Esophagus muscularis mucosa (tissue), 4 donors: ENCODE measurements at regions of chr18 and their contacts with region 1.

Region 1: DNA sequence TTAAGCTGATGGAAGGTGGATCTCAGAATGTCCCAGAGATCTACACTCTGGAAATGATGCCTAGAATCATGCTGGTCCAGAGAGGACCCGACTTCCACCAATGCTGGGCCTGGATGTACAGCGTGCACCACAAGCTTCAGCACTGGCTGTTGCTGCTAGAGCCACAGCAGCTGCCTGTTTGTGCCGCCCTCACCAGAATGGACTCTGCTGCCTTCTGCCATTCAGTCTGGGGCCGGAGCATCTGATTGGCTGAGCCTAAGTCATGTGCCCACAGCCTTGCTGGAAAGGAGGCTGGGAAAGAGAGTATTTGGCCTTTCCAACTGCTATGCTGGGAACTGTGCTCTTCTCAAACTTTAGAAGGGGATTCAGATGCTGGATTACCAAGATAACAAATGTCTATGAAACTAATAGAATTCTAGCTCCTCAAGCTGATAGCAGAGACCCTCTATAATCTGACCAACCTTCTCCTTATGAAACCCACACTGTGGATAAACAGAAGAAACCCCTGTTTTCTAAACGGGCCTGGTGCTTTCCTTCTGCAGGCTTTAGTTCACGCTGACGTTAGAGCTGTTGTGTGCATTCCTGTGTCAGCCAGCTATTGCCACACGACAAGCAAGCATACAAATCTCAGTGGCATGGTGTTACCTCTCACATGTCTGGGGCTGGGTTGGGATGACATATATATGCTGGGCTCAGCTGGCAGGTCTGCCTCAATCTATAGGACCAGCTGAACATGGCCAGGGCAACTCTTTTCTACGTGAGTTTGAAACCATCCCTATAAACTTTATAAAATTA is 4.1 kb upstream of the LOXHD1 start:
- DNase-seq: no peak
- H3K4me3 ChIP-seq: no peak overlapping the region
- H3K27ac ChIP-seq: no peak overlapping the region
- H3K4me1 ChIP-seq: peaks cover 0 to 2% (median 0%) of the 10 kb centered on the region in 4 donors
- H3K27me3 ChIP-seq: no peaks in the 10 kb centered on the region
- CTCF ChIP-seq: no peak
- EP300 ChIP-seq: no peak
- POLR2A ChIP-seq: no peak

Region 2: DNA sequence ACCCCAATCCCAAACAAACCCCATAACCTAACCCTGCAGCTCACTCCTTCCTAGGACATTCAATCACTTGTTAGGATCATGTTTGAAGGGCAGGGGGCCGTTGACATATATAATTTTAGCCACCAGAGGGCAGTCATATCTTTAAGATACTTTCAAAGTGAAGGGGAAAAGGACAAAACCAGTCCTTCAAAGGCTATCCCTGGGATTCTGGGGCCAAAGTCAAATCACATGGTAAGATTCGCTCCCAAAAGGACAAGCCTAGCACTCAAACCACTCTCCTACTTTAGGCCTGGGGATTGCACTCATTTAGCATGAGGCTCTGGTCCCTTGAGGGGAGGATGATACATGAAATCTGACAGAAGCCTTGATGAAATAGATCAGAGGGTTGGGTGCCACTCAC is 512.3 kb before region 1 on chr18:
- intact Hi-C with region 1: loop called (anchors 5 kb)
- DNase-seq: no peak
- H3K4me3 ChIP-seq: no peak overlapping the region
- H3K27ac ChIP-seq: no peak overlapping the region
- H3K4me1 ChIP-seq: peaks cover 0 to 6% (median 0%) of the 10 kb centered on the region in 4 donors
- H3K27me3 ChIP-seq: no peaks in the 10 kb centered on the region
- CTCF ChIP-seq: peak; percentile 60 to 68 (median 60)
- EP300 ChIP-seq: no peak
- POLR2A ChIP-seq: no peak

Region 3: GRCh38 chr18:46281185-46282176 is 379.7 kb before region 1 on chr18:
- intact Hi-C with region 1: loop called (anchors 2 kb)
- DNase-seq: no peak
- H3K4me3 ChIP-seq: no peak overlapping the region
- H3K27ac ChIP-seq: no peak overlapping the region
- H3K4me1 ChIP-seq: peaks cover 6 to 9% (median 7%) of the 10 kb centered on the region in 4 donors
- H3K27me3 ChIP-seq: no peaks in the 10 kb centered on the region
- CTCF ChIP-seq: peak; percentile 84 to 91 (median 88)
- EP300 ChIP-seq: no peak
- POLR2A ChIP-seq: no peak